ENCODE measurements at regions of chr1 and their contacts with region 1.

Region 1: DNA sequence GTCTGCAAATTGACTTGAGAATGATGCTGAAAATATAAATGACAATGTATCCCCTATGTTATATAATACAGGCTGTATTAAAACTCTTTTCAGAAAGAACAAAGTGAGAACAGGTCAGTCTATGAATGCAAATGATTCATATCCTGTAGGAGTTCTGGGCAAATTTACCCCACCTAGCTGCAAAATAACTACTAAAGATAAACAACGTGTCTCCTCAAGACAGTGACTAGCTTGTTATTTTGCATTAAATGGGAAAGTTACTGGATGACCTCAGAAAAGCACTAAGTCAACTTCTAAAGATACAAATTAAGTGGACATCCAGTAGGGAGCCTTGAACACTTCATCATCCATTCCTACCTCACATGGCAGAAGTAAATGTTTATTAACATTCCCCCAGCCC is 11.1 kb downstream of the RNF19B start:
- DNase-seq: no peak
- ATAC-seq: peak in 1 of 8 donors; percentile 37
- H3K4me3 ChIP-seq: no peak overlapping the region
- H3K27ac ChIP-seq: no peak overlapping the region
- H3K4me1 ChIP-seq: peaks cover 0 to 57% (median 18%) of the 10 kb centered on the region in 9 donors
- H3K27me3 ChIP-seq: no peaks in the 10 kb centered on the region
- CTCF ChIP-seq: peak in 1 of 9 donors; percentile 12

Region 2: DNA sequence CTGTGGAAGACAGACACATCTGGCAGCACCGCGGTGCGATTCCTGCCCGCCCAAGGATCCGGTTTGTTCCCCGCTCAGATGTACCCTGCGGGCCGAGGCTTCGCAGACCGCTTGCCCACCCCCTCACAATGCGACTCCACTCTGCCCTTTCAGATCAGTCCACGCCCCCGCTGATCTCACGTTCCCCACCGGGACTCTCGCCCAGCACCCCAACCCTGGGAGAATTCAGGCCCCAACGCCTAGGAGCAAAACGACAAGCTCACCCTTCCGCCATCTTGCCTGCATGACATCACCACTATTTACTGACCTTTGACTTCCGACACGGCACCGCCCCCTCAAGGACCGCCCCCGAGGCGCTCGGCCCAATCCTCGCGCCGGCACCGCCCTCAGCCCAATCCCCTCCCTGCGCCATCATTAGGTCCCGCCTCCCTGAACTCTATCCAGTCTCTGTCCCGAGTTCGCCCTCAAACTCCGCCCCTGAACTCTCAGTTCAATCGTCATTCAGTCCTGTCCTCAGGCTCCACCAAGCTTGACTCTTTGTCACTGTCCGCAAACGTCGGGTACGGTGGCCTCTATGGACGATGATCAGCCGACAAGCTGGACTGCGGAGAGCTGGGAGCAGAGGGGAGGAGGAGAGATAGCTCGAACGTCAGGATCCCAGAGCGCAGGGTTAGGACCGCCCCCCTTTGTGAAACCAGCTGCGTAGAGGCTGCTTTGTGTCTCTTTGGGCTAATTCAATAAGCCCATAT is 559.2 kb before region 1 on chr1 and contains the start of gene BSDC1:
- intact Hi-C with region 1: no loop called
- DNase-seq: peak; percentile 98 to 99
- ATAC-seq: peak; percentile 98 to 99 (median 99)
- H3K4me3 ChIP-seq: peak within 1 kb of the TSS; percentile 59 to 90 (median 86)
- H3K27ac ChIP-seq: peak within 1 kb of the TSS; percentile 84 to 97 (median 92)
- H3K4me1 ChIP-seq: peaks cover 7 to 48% (median 33%) of the 10 kb centered on the region in 9 donors
- H3K27me3 ChIP-seq: no peaks in the 10 kb centered on the region
- CTCF ChIP-seq: peak in 1 of 9 donors; percentile 8
- total RNA-seq, gene BSDC1: 37.2 to 49.4 (median 45.9) TPM

Region 3: DNA sequence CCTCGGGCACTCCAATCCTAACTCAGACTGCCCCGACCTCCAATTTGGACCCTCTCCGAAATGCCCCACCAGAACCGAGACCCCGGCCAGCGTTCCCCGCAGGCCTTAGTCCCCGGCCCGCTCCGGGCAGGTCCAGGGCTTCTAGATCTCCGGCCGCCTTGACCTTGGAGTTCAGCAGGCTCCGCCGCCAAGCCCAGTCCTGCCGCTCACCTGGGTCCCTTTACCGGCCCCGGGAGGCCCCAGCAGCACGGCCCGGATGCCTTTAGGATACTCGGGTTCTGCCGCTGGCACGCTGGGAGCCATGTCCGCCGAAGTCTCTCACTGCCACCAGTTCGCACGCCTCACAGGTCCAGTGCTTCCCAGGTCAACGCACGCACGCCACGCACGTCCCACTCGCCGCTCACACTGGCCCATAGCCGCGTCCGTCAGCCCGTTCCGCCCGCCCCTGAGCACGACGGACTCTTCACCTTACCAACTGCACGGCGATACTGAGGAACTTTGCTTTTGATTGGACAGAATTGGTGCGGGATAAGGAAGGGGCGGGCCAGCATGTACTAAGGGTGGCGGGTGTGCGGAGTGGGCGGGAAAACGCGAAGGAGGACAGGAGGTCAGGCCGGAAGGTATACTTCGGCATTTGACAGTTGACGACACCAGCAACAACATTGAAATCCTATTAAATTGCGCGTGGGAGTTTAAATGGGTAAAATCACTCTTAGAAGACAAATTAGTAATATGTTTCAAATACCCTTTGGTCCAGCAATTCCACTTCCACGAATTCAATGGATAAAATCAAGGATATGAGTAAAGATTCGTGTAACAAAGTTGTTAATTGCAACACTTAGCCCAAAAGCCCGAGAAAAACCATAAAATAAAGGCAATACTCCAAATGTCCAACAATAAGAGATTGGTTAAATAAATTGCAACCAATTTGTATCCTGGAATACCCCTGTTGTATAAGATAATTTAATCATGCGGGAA is 83.3 kb after region 1 on chr1 and contains the start of gene AK2:
- intact Hi-C with region 1: loop called in 2 of 10 experiments (anchors 5 to 10 kb)
- DNase-seq: peak; percentile 96 to 97
- ATAC-seq: peak; percentile 100
- H3K4me3 ChIP-seq: peak within 1 kb of the TSS; percentile 60 to 98 (median 87)
- H3K27ac ChIP-seq: peak within 1 kb of the TSS; percentile 2 to 94 (median 86)
- H3K4me1 ChIP-seq: peaks cover 3 to 59% (median 30%) of the 10 kb centered on the region in 9 donors
- H3K27me3 ChIP-seq: no peaks in the 10 kb centered on the region
- CTCF ChIP-seq: no peak
- total RNA-seq, gene AK2: 93.3 to 154 (median 111) TPM

Region 4: DNA sequence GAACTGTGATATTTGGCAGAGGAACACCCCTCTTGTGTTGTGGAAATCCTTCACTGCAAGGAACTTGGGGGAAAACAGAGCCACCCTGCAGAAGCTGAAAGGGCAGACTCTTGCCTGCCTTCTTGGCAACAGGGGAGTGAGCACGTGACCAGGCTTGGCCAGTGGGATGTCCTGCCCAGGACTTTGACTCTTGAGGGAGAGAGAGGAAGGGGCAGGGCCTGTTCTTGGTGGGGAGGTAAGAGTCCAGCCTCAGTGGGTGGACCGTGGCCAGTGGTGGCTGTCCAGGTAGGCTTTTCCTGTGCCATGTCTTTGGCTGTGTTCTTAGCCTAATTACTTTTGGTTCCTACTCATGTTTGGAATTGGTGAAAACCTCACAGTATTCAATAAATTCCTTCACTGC is 91.8 kb after region 1 on chr1:
- intact Hi-C with region 1: loop called in 1 of 10 experiments (anchors 10 kb)
- DNase-seq: no peak
- ATAC-seq: peak in 1 of 8 donors; percentile 36
- H3K4me3 ChIP-seq: no peak overlapping the region
- H3K27ac ChIP-seq: peak overlapping the region in 1 of 10 donors; percentile 63
- H3K4me1 ChIP-seq: peaks cover 0 to 33% (median 8%) of the 10 kb centered on the region in 9 donors
- H3K27me3 ChIP-seq: no peaks in the 10 kb centered on the region
- CTCF ChIP-seq: no peak

Region 5: DNA sequence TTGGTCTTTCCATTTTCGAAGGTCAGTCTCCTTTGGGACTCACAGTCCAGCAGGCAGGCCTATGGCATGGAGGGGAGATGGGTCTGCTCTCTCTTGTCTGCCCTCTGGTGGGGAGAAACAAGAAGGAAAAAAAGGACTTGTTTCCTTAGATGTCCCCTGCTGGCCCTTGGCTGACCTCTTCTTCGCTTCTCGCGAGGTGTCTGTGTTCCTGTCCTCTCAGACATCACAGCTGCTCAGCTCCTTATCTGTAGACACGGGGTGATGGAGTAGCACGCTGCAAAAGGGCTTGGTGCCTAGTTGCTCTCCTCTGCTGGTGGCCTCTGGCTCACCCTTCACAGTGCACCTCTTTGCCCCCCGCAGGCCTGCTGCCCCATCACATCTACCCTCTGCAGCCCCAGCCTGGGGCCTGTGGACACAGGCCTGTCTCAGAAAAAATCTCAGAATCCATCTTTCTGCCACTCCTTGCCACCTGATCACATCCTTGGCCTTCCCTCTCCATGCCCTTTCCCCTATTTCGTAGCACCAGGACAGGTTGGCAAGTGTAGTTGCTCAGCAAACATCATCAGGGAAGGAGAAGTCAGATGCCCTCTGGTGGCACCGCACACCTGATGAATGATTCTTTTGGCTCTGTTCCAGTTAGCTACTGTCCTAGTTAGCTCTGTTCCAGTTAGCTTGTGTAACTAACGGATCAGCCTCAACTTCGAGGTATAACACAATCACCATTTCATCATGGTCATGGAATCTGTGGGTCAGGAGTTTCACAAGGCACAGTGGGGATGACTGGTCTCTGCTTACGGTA is 101.9 kb after region 1 on chr1:
- intact Hi-C with region 1: loop called in 1 of 10 experiments (anchors 5 kb)
- DNase-seq: peak; percentile 75 to 91
- ATAC-seq: peak; percentile 88 to 98 (median 95)
- H3K4me3 ChIP-seq: no peak overlapping the region
- H3K27ac ChIP-seq: peak overlapping the region in 8 of 10 donors; percentile 24 to 74 (median 50)
- H3K4me1 ChIP-seq: peaks cover 4 to 24% (median 14%) of the 10 kb centered on the region in 9 donors
- H3K27me3 ChIP-seq: no peaks in the 10 kb centered on the region
- CTCF ChIP-seq: peak; percentile 58 to 82 (median 78)

Region 6: GRCh38 chr1:33244143-33244820 is 290.8 kb after region 1 on chr1:
- intact Hi-C with region 1: no loop called
- DNase-seq: no peak
- ATAC-seq: no peak
- H3K4me3 ChIP-seq: no peak overlapping the region
- H3K27ac ChIP-seq: peak overlapping the region in 6 of 10 donors; percentile 6 to 64 (median 24)
- H3K4me1 ChIP-seq: peaks cover 0 to 5% (median 0%) of the 10 kb centered on the region in 9 donors
- H3K27me3 ChIP-seq: no peaks in the 10 kb centered on the region
- CTCF ChIP-seq: no peak

Region 7: GRCh38 chr1:33460947-33461629 is 507.6 kb after region 1 on chr1:
- intact Hi-C with region 1: no loop called
- DNase-seq: peak; percentile 44 to 77
- ATAC-seq: peak; percentile 61 to 87 (median 75)
- H3K4me3 ChIP-seq: no peak overlapping the region
- H3K27ac ChIP-seq: peak overlapping the region; percentile 59 to 93 (median 84)
- H3K4me1 ChIP-seq: peaks cover 2 to 74% (median 35%) of the 10 kb centered on the region in 9 donors
- H3K27me3 ChIP-seq: no peaks in the 10 kb centered on the region
- CTCF ChIP-seq: no peak